Calu3 (cell line): ENCODE measurements at regions of chr1 and their contacts with region 1.

Region 1: DNA sequence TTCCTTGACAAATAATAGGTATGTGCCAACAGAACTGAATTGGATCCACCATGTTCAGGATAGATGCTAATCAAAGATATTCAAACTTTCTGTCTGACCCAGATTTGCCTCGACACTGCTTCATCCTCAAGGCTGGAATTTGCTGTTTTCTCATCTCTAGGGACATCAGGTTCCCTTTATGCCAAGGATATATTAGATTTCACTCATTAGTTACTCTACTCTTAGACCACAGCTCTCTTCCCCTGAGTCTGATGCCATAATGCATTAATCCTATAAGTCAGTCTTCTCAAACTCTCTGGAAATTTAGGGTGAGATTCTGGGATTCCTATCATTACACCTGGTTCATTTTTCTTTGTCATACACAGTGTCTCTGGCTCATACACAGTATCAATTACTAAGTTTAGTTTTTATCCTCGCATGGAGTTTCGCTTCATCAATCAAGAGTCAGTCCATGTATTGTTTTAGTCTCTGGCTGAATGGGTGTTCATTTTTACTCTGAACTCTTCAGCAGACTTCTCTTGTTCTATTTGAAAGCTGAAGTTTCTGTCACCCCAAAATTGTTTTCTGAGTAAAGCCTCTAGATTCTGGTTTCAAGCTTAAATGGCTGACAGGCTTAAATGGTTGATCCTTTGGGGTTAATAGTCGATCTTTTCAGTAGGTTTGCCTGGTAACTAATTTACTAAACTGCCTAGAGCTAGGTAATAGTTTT is 9.3 kb upstream of the DCAF6 start:
- DNase-seq: no peak
- H3K4me3 Mint-ChIP-seq: peak overlapping the region; percentile 66
- H3K27ac Mint-ChIP-seq: peak overlapping the region; percentile 82
- H3K4me1 Mint-ChIP-seq: peaks cover 33% of the 10 kb centered on the region
- H3K27me3 Mint-ChIP-seq: no peaks in the 10 kb centered on the region
- CTCF ChIP-seq: no peak

Region 2: GRCh38 chr1:167676205-167676915 is 250.8 kb before region 1 on chr1:
- CTCF ChIA-PET with region 1: no interaction called
- intact Hi-C with region 1: no loop called
- DNase-seq: no peak
- H3K4me3 Mint-ChIP-seq: no peak overlapping the region
- H3K27ac Mint-ChIP-seq: no peak overlapping the region
- H3K4me1 Mint-ChIP-seq: no peaks in the 10 kb centered on the region
- H3K27me3 Mint-ChIP-seq: peaks cover 33% of the 10 kb centered on the region
- CTCF ChIP-seq: no peak

Region 3: GRCh38 chr1:167715157-167715999 is 211.8 kb before region 1 on chr1:
- CTCF ChIA-PET with region 1: interaction called, 7 read pairs
- intact Hi-C with region 1: loop called (anchors 5 kb)
- DNase-seq: peak; percentile 88
- H3K4me3 Mint-ChIP-seq: peak overlapping the region; percentile 78
- H3K27ac Mint-ChIP-seq: peak overlapping the region; percentile 97
- H3K4me1 Mint-ChIP-seq: peaks cover 22% of the 10 kb centered on the region
- H3K27me3 Mint-ChIP-seq: no peaks in the 10 kb centered on the region
- CTCF ChIP-seq: peak; percentile 91

Region 4: DNA sequence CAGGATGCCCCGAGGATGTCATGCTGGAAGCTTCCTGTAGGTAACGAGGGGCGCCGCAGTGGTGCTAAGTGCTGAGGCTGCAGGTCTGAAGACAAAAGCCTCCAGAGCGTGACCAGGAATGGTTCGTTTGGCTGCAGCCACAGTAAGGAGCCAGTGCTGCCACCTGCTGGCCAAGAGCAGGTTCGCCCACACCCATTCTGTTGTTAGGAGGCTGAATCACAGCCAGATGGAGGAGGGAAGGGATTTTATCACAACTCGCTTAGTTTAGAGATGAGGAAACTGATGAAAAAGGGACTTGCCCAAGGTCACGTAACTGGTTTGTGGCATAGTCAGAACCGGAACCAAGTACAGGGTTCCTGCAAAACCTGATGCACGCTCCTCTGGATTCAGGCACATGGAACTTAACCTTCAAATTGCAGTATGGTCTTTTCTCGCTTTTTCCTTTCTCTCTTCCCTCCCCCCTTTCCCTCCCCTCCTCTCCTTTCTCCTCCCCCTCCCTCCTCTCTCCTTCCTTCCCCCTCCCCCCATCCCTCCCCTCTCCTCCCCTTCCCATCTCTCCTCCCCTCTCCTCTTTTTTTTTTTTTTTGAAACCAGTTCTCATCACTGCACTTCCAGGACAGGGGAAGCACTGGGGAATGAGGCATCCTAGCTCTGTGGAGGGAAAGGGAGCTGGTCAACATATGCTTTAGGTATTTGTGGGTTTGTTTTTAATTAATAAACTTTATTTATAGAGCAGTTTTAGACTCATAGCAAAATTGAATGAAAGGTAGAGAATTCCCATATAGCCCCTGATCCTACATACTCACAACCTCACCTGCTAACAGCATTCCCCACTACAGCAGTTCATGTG is 123.6 kb before region 1 on chr1:
- CTCF ChIA-PET with region 1: interaction called, 3 read pairs
- intact Hi-C with region 1: loop called (anchors 1 kb)
- DNase-seq: peak; percentile 95
- H3K4me3 Mint-ChIP-seq: peak overlapping the region; percentile 20
- H3K27ac Mint-ChIP-seq: peak overlapping the region; percentile 3
- H3K4me1 Mint-ChIP-seq: peaks cover 24% of the 10 kb centered on the region
- H3K27me3 Mint-ChIP-seq: no peaks in the 10 kb centered on the region
- CTCF ChIP-seq: peak; percentile 95

Region 5: DNA sequence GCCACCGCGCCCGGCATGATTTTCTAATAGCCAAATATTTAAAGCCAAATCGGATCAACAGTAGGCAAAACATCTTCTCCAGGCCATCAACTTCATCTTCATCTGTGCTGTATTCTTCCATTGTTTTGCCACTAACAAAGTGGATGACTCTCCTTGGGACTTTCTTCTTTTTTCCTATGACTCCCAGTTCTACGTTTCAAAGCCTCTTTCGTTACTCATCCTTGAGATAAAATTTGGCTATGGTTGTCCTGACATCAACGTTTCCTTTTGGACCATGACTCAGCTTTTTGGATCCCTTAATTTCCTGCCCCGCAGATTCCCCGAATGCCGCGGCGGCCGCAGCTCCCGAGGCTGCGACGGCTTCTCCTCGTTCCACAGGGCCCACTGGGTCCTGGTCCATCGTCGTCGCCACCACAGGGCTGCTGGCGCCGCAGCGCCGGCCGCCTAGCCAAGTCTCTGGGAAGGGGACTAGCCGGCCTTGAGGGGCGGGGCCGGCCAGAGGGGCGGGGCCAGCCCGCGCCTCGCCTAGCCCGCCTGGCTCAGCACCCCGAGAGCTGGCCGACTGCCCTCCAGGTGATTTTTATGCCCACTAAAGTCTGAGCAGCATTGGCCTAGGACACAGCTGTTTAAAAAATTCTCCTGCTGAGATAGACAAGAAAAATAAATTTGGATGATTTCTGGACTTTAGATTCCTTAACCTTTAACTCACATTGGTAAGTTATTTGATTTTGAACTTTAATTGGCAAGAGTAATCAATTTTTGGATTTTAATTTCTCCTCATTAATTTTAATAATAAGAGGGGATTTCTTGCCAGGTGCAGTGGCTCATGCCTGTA is 107.1 kb before region 1 on chr1:
- CTCF ChIA-PET with region 1: no interaction called
- intact Hi-C with region 1: loop called (anchors 5 kb)
- DNase-seq: peak; percentile 85
- H3K4me3 Mint-ChIP-seq: peak overlapping the region; percentile 85
- H3K27ac Mint-ChIP-seq: peak overlapping the region; percentile 95
- H3K4me1 Mint-ChIP-seq: peaks cover 48% of the 10 kb centered on the region
- H3K27me3 Mint-ChIP-seq: no peaks in the 10 kb centered on the region
- CTCF ChIP-seq: no peak

Region 6: DNA sequence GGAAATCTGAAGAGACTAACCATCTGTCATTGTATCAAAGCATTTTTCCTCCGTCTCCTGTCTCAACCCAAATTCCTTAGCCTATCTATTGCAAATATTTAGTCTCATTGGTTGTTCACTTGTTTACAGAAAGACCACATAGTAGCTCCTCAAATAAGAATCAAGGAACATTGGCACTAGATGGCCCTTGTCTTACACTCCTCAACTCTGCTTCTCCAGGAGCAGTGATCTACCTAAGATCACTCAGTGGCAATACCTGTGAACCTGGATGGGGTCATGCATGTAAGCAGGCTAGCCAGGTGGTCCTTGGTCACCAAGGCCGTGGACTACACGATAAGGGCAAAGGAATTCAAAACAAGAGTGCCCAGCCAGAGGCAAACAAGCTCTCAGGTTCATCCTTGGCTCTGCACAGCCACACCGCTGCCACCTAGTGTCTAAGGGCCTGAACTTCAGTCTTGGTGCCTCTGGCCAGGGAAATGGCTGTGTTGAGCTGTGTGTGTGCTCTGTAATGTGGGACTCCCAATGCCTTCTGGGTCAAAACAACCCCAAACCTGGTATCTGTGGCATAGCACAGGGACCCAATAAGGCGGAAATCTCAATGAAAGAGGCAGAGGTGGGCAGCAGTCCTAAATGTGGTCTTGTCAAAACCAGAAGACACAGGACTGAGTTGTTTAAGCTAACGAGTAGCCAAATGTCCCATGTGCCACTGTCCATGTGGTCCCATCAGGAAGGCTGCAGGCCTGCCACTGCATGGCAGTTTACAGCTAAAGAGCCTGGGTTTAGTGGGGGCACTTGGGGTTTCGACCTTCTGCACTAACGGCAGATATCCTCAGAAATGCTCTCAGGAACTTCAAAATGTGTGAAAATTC is 155.0 kb after region 1 on chr1:
- CTCF ChIA-PET with region 1: interaction called, 16 read pairs
- intact Hi-C with region 1: no loop called
- DNase-seq: peak; percentile 87
- H3K4me3 Mint-ChIP-seq: no peak overlapping the region
- H3K27ac Mint-ChIP-seq: no peak overlapping the region
- H3K4me1 Mint-ChIP-seq: no peaks in the 10 kb centered on the region
- H3K27me3 Mint-ChIP-seq: no peaks in the 10 kb centered on the region
- CTCF ChIP-seq: peak; percentile 96